IMR-90 (cell line): ENCODE measurements at regions of chr1 and their contacts with region 1.

Region 1: GRCh38 chr1:236064674-236065508 is at the start of gene NID1:
- DNase-seq: peak; percentile 79
- ATAC-seq: peak; percentile 90
- H3K4me3 ChIP-seq: peak within 1 kb of the TSS; percentile 78
- H3K27ac ChIP-seq: peak within 1 kb of the TSS; percentile 50
- H3K4me1 ChIP-seq: peaks cover 3% of the 10 kb centered on the region; the same call in 1 of the 2 replicates
- H3K27me3 ChIP-seq: no peaks in the 10 kb centered on the region
- CTCF ChIP-seq: peak; percentile 36
- POLR2A ChIP-seq: 0 out of 2 replicates have a peak, but pooled peaks have one; percentile 22
- RAD21 ChIP-seq: no peak
- total RNA-seq, gene NID1: 21.9 and 23.9 TPM in 2 replicates

Region 2: GRCh38 chr1:235866913-235867845 is 197.7 kb before region 1 on chr1:
- CTCF ChIA-PET with region 1: no interaction called
- POLR2A ChIA-PET with region 1: no interaction called
- dilution Hi-C with region 1: no loop called
- in situ Hi-C with region 1: no loop called
- intact Hi-C with region 1: loop called (anchors 2 kb)
- DNase-seq: peak; percentile 90
- ATAC-seq: peak; percentile 97
- H3K4me3 ChIP-seq: peak overlapping the region; percentile 92
- H3K27ac ChIP-seq: peak overlapping the region; percentile 86
- H3K4me1 ChIP-seq: peaks cover 5% of the 10 kb centered on the region; the same call in 1 of the 2 replicates
- H3K27me3 ChIP-seq: no peaks in the 10 kb centered on the region
- CTCF ChIP-seq: no peak
- POLR2A ChIP-seq: peak; percentile 48
- RAD21 ChIP-seq: no peak

Region 3: GRCh38 chr1:236009857-236010256 is 55.0 kb before region 1 on chr1:
- CTCF ChIA-PET with region 1: no interaction called
- POLR2A ChIA-PET with region 1: no interaction called
- dilution Hi-C with region 1: no loop called
- in situ Hi-C with region 1: no loop called
- intact Hi-C with region 1: no loop called
- DNase-seq: peak; percentile 83
- ATAC-seq: peak; percentile 68
- H3K4me3 ChIP-seq: no peak overlapping the region
- H3K27ac ChIP-seq: no peak overlapping the region
- H3K4me1 ChIP-seq: peaks cover 7% of the 10 kb centered on the region
- H3K27me3 ChIP-seq: no peaks in the 10 kb centered on the region
- CTCF ChIP-seq: no peak
- POLR2A ChIP-seq: no peak
- RAD21 ChIP-seq: no peak